ENCODE measurements at regions of chr12 and their contacts with region 1.

Region 1: GRCh38 chr12:4356041-4356327 is 23.5 kb downstream of the FGF23 start:
- DNase-seq: peak; percentile 50
- H3K4me3 Mint-ChIP-seq: no peak overlapping the region
- H3K27ac Mint-ChIP-seq: no peak overlapping the region
- H3K4me1 Mint-ChIP-seq: peaks cover 10% of the 10 kb centered on the region
- H3K27me3 Mint-ChIP-seq: peaks cover 9% of the 10 kb centered on the region

Region 2: DNA sequence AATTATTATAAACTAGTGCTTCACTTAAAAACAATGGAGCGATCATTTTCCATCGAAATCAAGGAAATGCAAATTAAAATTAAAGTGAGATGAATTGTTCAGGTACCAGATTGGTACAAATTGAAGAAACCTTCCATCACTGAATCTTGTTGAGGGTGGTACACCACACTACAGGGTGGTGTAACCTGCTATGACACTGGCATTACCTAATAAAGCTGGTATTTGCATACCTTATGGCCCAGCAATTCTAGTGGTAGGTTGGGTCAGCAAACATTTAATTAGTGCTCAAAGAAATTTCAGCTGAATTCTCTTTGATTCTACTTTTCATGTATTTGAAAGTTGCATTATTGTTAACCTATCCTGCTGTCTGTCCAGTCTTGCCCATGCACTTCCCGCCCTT is 25.8 kb before region 1 on chr12:
- intact Hi-C with region 1: no loop called
- DNase-seq: no peak
- H3K4me3 Mint-ChIP-seq: no peak overlapping the region
- H3K27ac Mint-ChIP-seq: no peak overlapping the region
- H3K4me1 Mint-ChIP-seq: no peaks in the 10 kb centered on the region
- H3K27me3 Mint-ChIP-seq: no peaks in the 10 kb centered on the region

Region 3: GRCh38 chr12:4526923-4527546 is 171.1 kb after region 1 on chr12:
- intact Hi-C with region 1: loop called (anchors 1 kb)
- DNase-seq: no peak
- H3K4me3 Mint-ChIP-seq: no peak overlapping the region
- H3K27ac Mint-ChIP-seq: no peak overlapping the region
- H3K4me1 Mint-ChIP-seq: peaks cover 7% of the 10 kb centered on the region
- H3K27me3 Mint-ChIP-seq: no peaks in the 10 kb centered on the region

Region 4: GRCh38 chr12:4763549-4763948 is 407.6 kb after region 1 on chr12:
- intact Hi-C with region 1: loop called (anchors 2 kb)
- DNase-seq: no peak
- H3K4me3 Mint-ChIP-seq: no peak overlapping the region
- H3K27ac Mint-ChIP-seq: no peak overlapping the region
- H3K4me1 Mint-ChIP-seq: peaks cover 4% of the 10 kb centered on the region
- H3K27me3 Mint-ChIP-seq: peaks cover 5% of the 10 kb centered on the region

Measured in activated T-helper 2 cell treated with anti-CD3 and anti-CD28 coated beads, Interferon-gamma antibody, Interleukin-2, Interleukin-4, amounts not matched to agents 10 μg/mL and 5 μg/mL and 100 μg/mL, durations not matched to agents 14 hours and 24 hours and 36 hours (primary cell).